ENCODE measurements at regions of chr12 and their contacts with region 1.

Region 1: DNA sequence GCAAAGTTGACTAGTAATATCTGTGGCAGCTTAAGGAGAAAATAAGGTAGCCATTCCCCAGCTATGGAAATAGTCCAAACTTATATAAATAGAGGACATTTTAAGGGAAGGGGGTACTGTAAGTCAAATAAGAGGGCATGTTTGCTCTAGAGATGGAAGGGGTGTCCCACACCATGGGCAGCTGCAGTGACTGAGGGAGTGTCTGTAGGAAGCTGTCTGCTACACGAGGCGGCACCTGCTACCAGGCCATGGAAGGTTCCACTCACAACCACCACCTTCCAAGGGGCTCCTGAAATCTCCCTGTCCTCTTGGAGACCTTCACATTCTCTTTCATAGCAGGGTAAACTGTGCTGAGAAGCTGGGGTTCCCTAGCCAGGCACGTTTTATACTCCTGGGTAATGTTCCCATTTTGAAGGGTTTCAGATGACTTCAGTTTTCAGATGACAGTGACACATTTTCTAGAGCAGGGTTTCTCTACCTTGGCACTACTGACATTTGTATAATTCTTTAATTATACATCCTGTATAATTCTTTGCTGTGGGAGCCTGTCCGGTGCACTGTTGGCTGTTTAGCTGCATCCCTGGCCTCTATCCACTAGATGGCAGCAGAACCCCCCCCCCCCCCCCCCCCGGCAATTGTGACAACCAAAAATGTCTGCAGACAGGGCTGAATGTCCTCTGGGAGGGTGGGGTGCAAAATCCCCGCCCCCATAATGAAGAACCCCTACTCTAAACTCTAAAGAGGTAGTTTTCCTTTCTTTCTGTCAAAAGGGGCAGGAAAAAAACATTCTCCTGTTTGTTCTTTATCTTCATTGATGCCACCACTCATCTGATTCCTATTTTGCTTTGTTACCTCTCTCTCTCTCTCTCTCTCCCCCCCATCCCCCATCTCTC is 11.6 kb upstream of the SMCO2 start:
- DNase-seq: peak; percentile 66
- H3K4me3 Mint-ChIP-seq: no peak overlapping the region
- H3K27ac Mint-ChIP-seq: peak overlapping the region; percentile 52
- H3K4me1 Mint-ChIP-seq: peaks cover 51% of the 10 kb centered on the region
- H3K27me3 Mint-ChIP-seq: no peaks in the 10 kb centered on the region

Region 2: GRCh38 chr12:27260746-27261145 is 174.2 kb before region 1 on chr12:
- intact Hi-C with region 1: no loop called
- DNase-seq: no peak
- H3K4me3 Mint-ChIP-seq: no peak overlapping the region
- H3K27ac Mint-ChIP-seq: no peak overlapping the region
- H3K4me1 Mint-ChIP-seq: peaks cover 20% of the 10 kb centered on the region
- H3K27me3 Mint-ChIP-seq: no peaks in the 10 kb centered on the region

Region 3: GRCh38 chr12:27462151-27462694 is 27.3 kb after region 1 on chr12:
- intact Hi-C with region 1: loop called (anchors 2 kb)
- DNase-seq: peak; percentile 60
- H3K4me3 Mint-ChIP-seq: peak overlapping the region; percentile 27
- H3K27ac Mint-ChIP-seq: peak overlapping the region; percentile 68
- H3K4me1 Mint-ChIP-seq: peaks cover 58% of the 10 kb centered on the region
- H3K27me3 Mint-ChIP-seq: no peaks in the 10 kb centered on the region

Region 4: DNA sequence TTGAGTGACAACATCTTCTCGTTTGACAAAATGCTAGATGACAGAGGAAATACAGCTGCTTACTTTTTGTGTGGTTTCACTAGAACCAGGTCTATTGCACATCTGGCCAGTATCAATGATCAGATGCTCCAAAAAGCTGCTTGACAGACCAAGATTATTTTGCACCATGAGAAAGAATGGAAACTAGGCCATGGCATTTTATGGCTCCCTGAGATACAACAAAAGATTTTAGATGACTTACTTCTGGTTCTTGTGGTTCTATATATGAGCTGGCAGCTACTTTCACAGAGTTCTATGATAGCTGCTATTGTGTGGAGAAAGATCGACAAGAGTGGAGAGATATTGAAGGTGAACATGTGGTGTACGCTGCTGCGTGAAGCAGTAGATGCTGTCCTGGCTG is 63.2 kb after region 1 on chr12:
- intact Hi-C with region 1: loop called (anchors 2 kb)
- DNase-seq: peak; percentile 70
- H3K4me3 Mint-ChIP-seq: peak overlapping the region; percentile 34
- H3K27ac Mint-ChIP-seq: peak overlapping the region; percentile 47
- H3K4me1 Mint-ChIP-seq: peaks cover 46% of the 10 kb centered on the region
- H3K27me3 Mint-ChIP-seq: peaks cover 25% of the 10 kb centered on the region

Region 5: GRCh38 chr12:27635349-27635972 is 200.5 kb after region 1 on chr12:
- intact Hi-C with region 1: loop called (anchors 1 kb)
- DNase-seq: peak; percentile 59
- H3K4me3 Mint-ChIP-seq: no peak overlapping the region
- H3K27ac Mint-ChIP-seq: no peak overlapping the region
- H3K4me1 Mint-ChIP-seq: peaks cover 10% of the 10 kb centered on the region
- H3K27me3 Mint-ChIP-seq: peaks cover 2% of the 10 kb centered on the region

Region 6: GRCh38 chr12:27652174-27652763 is 217.3 kb after region 1 on chr12:
- intact Hi-C with region 1: loop called (anchors 1 kb)
- DNase-seq: peak; percentile 81
- H3K4me3 Mint-ChIP-seq: no peak overlapping the region
- H3K27ac Mint-ChIP-seq: no peak overlapping the region
- H3K4me1 Mint-ChIP-seq: peaks cover 21% of the 10 kb centered on the region
- H3K27me3 Mint-ChIP-seq: no peaks in the 10 kb centered on the region

Region 7: DNA sequence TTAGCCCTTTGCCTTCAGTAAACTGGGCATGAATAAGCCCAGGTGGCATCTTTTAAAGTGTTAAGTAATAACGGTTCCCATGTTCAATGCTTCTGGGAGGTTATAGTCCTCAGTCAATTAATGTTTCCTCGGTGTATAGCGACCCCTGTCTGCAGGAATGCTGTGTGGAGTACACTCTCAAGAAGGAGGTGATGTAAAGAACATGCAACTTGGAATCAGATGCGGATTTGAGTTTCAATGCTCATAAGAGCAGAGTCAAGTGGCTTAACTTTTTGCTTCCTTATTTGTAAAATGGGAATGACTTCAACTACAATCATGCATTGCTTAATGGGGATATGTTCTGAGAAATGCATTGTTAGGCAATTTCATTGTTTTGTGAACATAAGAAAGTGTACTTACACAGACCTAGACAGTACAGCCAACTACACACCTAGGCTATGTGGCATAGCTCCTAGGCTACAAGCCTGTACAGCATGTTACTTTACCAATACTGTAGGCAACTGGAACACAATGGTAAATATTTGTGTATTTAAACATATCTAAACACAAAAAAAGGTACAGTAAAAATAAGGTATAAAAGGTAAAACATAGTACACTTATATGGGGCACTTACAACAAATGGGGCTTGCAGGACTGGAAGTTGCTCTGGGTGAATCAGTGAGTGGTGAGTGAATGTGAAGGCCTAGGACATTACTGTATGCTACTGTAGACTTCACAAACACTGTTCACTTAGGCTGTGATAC is 269.0 kb after region 1 on chr12:
- intact Hi-C with region 1: loop called (anchors 1 kb)
- DNase-seq: peak; percentile 92
- H3K4me3 Mint-ChIP-seq: no peak overlapping the region
- H3K27ac Mint-ChIP-seq: no peak overlapping the region
- H3K4me1 Mint-ChIP-seq: peaks cover 2% of the 10 kb centered on the region
- H3K27me3 Mint-ChIP-seq: peaks cover 16% of the 10 kb centered on the region

Region 8: DNA sequence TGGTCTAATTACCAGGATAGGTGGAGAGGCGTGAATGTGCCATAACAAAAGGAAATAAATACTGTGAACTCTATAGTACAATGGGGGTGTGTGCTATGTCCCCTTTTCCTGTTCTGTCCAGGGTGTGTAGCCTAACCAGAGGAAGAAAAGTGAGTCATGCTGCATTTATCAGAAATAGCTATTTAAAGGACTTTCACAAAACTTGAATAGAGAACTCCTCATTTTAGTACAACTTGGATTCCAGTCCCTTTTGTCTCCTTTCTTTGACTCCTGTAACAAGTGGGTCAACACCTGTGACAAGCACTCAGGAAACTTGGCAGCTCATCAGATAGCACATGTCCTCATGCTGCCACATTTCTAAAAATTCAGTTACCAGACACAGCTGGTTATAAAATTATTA is 878.7 kb after region 1 on chr12:
- intact Hi-C with region 1: no loop called
- DNase-seq: no peak
- H3K4me3 Mint-ChIP-seq: no peak overlapping the region
- H3K27ac Mint-ChIP-seq: no peak overlapping the region
- H3K4me1 Mint-ChIP-seq: no peaks in the 10 kb centered on the region
- H3K27me3 Mint-ChIP-seq: no peaks in the 10 kb centered on the region

Measured in activated CD4-positive, alpha-beta T cell treated with anti-CD3 and anti-CD28 coated beads, Interleukin-2, amount 10 ng/mL, durations not matched to agents 24 days and 14 days (primary cell).